Transverse colon (tissue), 4 donors: ENCODE measurements at regions of chr5 and their contacts with region 1.

Region 1: GRCh38 chr5:42908509-42909488 is 97.1 kb upstream of the SELENOP start:
- DNase-seq: peak; percentile 91
- H3K4me3 ChIP-seq: peak overlapping the region; percentile 16 to 46 (median 30)
- H3K27ac ChIP-seq: no peak overlapping the region
- H3K4me1 ChIP-seq: peaks cover 0 to 7% (median 3%) of the 10 kb centered on the region in 4 donors
- H3K27me3 ChIP-seq: peaks cover 37% of the 10 kb centered on the region
- CTCF ChIP-seq: peak; percentile 78 to 89 (median 84)
- EP300 ChIP-seq: no peak
- POLR2A ChIP-seq: no peak

Region 2: GRCh38 chr5:43389679-43390329 is 481.0 kb after region 1 on chr5:
- in situ Hi-C with region 1: loop called in 1 of 4 experiments (anchors 25 kb)
- intact Hi-C with region 1: no loop called
- DNase-seq: peak; percentile 33
- H3K4me3 ChIP-seq: no peak overlapping the region
- H3K27ac ChIP-seq: no peak overlapping the region
- H3K4me1 ChIP-seq: peaks cover 0 to 5% (median 0%) of the 10 kb centered on the region in 4 donors
- H3K27me3 ChIP-seq: no peaks in the 10 kb centered on the region
- CTCF ChIP-seq: peak; percentile 68 to 80 (median 77)
- EP300 ChIP-seq: no peak
- POLR2A ChIP-seq: no peak